AG04449 (cell line): ENCODE measurements at regions of chr19 and their contacts with region 1.

Region 1: GRCh38 chr19:14556662-14557188 is 15.1 kb downstream of the NDUFB7 start:
- DNase-seq: no peak
- H3K4me3 ChIP-seq: peak overlapping the region; percentile 34
- CTCF ChIP-seq: peak; percentile 100

Region 2: GRCh38 chr19:14479975-14480699 is 76.6 kb before region 1 on chr19:
- CTCF ChIA-PET with region 1: interaction called, 14 read pairs
- POLR2A ChIA-PET with region 1: no interaction called
- DNase-seq: no peak
- H3K4me3 ChIP-seq: no peak overlapping the region
- CTCF ChIP-seq: peak; percentile 95

Region 3: GRCh38 chr19:14529254-14530004 is 27.3 kb before region 1 on chr19 and contains the start of gene TECR:
- CTCF ChIA-PET with region 1: interaction called, 22 read pairs
- POLR2A ChIA-PET with region 1: no interaction called
- DNase-seq: peak; percentile 98
- H3K4me3 ChIP-seq: peak within 1 kb of the TSS; percentile 98
- CTCF ChIP-seq: no peak

Region 4: DNA sequence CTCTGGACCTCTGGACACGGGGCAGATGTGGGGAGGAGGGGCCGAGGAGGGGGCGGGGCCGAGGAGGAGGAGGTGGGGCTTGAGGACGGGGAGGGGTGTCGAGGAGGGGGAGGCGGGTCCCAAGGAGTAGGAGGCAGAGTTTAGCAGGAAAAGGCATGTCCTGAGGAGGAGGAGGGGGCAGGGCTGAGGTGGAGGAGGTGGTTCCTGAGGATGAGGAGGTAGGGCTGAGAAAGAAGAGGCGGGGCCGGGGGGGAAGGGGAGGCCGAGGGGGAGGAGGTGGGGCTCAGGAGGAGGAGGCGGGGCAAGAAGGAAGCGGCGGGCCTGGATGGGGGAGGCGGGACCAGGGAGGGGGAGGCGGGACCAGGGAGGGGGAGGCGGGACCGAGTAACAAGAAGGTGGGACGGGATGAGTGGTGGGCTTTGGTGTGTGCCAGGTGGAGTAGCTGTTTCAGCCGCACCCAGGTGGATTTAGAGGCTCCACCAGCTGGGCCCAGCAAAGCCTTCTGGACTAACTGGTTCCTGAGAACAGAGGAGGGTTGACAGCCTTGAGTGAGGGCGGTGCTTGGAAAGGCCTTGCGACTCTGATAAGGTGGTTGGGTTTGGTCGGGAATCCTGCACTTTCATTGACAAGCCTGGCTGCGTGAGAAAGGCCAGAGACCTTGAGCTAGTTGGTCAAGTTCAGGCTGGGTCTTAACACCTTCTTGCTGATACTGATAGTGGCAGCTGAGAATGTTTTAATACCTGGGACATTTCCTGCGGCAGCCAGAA is 19.6 kb before region 1 on chr19:
- CTCF ChIA-PET with region 1: interaction called, 37 read pairs
- POLR2A ChIA-PET with region 1: no interaction called
- DNase-seq: no peak
- H3K4me3 ChIP-seq: no peak overlapping the region
- CTCF ChIP-seq: no peak

Region 5: GRCh38 chr19:14542711-14543328 is 13.9 kb before region 1 on chr19:
- CTCF ChIA-PET with region 1: interaction called, 70 read pairs
- POLR2A ChIA-PET with region 1: no interaction called
- DNase-seq: no peak
- H3K4me3 ChIP-seq: no peak overlapping the region
- CTCF ChIP-seq: no peak

Region 6: DNA sequence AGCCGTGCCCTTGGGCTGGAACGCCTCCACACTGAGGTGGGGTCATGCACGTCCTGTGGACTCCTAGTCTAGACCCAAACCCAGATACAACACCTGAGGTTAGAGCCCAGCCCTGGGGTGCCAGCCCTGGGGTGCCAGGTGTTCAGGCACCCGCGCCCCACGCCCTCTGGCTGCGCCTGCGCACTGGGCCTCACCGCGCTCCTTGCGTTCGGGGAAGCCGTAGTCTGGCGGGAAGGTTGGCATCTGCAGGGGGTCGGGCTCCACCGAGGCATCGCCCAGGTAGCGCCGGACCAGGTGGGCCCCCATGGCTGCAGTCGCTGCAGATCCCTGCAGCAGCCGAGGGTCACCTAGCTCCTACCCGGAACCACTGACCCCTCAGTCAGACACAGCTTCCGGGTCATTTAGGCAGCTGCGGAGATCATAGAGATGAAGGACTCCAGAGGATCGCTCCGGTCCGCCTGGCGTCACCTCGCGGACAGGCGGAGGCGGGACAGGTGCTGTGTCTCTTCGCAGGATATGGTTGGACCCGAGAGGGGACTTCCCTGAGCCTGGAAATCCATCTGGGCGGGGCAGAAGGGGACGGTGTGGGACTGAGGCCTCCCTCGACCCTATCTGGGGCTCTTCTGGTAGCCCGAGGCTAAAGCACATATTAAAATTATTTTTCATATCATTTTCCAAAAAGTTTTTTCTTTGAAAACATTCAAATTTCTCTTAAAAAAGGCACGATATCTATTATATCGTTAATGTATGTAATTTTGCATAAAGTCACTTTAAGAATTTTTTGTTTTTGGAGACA is 15.2 kb after region 1 on chr19 and contains the start of gene NDUFB7:
- CTCF ChIA-PET with region 1: interaction called, 95 read pairs
- POLR2A ChIA-PET with region 1: no interaction called
- DNase-seq: peak; percentile 72
- H3K4me3 ChIP-seq: peak within 1 kb of the TSS; percentile 99
- CTCF ChIP-seq: peak; percentile 93

Region 7: DNA sequence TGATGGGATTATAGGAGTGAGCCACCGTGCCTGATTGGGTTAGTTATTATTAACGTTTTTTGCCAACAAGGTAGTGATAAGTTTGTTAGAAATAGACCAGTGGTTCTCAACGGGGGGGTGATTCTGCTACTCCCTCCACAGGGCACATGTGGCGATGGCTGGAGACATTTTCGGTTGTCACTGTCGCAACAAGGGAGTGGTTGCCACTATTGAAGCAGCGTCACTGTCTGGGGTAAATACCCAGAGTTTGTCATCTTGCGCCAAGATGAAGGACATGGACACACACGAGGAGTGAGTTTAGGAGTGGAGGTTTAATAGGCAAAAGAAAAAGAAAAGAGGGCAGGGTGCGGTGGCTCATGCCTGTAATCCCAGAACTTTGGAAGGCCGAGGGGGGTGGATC is 99.0 kb after region 1 on chr19:
- CTCF ChIA-PET with region 1: no interaction called
- POLR2A ChIA-PET with region 1: no interaction called
- DNase-seq: no peak
- H3K4me3 ChIP-seq: no peak overlapping the region
- CTCF ChIP-seq: no peak

Region 8: DNA sequence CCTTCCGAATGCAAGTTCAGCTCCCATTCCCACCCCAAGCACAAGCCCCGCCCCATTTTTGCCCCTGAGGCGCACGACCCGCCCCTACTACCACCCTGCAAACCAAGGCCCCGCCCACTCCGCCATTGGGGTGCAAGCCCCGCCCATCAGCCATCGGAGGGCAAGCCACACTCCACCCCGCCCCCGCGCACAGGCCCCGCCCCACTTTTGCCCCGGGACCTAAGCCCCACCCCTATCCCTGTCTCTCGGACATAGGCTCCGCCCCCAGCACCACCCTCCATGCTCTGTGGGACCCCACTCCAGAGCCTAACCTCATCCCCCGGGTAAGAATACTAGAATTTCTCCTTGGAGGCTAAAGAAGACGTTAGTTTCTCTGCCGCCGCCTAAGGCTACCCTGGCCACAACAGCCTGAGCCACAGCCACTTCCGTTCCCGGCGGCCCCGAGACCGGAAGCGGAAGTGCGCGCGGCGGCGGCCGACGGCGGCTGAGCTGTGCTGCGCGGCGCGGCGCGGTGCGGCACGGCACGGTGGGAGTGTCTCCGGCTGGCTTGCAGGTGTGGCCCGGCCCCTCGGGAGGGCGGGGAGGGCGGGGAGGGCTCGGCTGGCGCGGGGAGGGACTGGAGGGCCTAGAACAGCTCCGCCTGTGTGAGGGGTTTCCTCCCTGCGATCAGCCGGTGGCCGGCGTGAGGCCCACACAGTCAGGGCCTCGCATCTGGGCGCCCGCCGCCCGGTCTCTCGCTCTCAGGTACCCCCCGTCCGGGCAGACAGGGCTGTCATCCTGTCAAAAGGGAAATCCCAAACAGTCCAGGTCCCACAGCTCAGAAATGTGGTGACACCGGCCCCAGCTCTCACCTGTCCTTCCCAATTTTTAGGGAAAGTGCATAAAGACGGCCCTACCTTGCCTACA is 133.1 kb after region 1 on chr19 and contains the start of gene ZNF333:
- CTCF ChIA-PET with region 1: interaction called, 16 read pairs
- POLR2A ChIA-PET with region 1: no interaction called
- DNase-seq: peak; percentile 40
- H3K4me3 ChIP-seq: peak within 1 kb of the TSS; percentile 84
- CTCF ChIP-seq: no peak